Transverse colon (tissue), 4 donors: ENCODE measurements at regions of chrX and their contacts with region 1.

Region 1: DNA sequence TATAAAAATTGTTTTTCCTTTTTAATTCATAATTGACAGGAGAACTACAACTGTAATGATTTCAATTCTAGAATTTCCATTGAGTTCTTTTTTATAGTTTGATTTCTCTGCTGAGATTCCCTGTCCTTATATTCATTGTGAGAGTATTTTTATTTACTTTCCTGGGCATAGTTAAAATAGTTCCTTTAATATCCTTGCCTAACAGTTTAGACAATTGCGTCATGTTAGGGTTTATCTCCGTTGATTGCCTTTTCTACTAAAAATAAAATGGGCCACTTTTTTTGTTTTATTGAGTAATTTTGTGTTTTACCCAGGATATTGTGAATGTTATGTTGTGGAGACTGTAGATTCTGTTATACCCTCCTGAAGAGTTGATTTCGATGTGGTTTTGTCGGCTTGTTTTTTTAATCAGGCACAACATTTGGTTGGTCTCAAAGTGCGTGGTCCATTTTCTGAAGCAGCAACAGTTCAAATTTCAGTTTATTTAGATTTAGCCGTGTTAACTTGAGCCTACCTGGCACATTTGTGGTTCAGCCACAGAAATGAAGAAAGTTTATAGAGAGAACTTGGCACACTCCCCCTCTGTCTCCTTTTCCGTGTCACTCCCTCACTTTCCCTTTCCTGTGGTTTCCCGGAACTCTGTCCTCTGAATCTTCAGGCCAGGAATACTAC is 16.0 kb upstream of the PRRG1 start:
- DNase-seq: no peak
- H3K4me3 ChIP-seq: no peak overlapping the region
- H3K27ac ChIP-seq: no peak overlapping the region
- H3K4me1 ChIP-seq: no peaks in the 10 kb centered on the region
- H3K27me3 ChIP-seq: no peaks in the 10 kb centered on the region
- CTCF ChIP-seq: no peak
- EP300 ChIP-seq: no peak
- POLR2A ChIP-seq: no peak

Region 2: DNA sequence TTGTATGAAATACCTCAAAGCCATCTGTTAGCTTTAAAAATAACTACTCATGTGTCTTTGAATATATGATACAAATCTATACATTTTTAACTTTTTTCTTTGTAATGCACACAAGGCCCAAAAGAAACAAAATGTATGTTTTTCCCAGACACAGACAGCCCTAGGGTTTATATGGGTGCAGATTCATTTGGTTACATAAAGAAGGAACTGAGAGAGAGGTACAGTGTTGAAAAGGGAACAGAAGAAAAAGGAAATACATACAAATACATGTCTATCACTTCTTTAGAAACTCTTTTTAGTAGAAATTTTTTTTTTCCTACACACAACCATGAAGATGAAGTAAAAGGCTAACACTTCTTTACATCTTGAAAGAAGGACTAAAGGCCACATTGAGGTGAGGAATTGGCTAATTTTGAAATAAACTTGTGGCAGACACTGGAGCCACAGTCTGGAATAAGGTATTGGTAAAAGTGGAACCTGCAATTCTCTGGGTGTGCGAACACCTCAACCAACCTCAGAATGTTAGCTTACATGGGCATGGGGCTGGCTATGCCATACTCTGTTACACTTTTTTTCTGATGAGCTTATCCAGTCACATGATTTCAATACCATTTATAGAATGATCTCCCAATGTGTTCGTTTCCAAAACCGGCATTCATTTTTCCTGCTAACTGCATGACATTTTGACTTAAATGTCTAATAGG is 257.1 kb before region 1 on chrX:
- in situ Hi-C with region 1: no loop called
- intact Hi-C with region 1: no loop called
- DNase-seq: no peak
- H3K4me3 ChIP-seq: no peak overlapping the region
- H3K27ac ChIP-seq: no peak overlapping the region
- H3K4me1 ChIP-seq: no peaks in the 10 kb centered on the region
- H3K27me3 ChIP-seq: no peaks in the 10 kb centered on the region
- CTCF ChIP-seq: no peak
- EP300 ChIP-seq: no peak
- POLR2A ChIP-seq: no peak

Region 3: DNA sequence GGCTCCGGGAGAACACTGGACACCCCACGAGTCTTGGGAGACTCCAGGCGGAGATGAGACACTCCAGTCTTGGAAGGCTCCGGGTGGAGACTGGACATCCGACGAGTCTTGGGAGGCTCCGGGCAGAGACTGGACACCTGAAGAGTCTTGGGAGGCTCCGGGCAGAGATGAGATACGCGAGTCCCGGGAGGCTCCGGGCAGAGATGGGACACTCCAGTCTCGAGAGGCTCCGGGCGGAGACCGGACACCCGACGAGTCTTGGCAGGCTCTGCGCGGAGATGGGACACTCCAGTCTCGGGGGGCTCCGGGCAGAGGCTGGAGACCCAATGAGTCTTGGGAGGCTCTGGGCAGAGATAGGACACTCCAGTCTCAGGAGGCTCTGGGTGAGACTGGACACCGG is 210.2 kb after region 1 on chrX:
- in situ Hi-C with region 1: no loop called
- intact Hi-C with region 1: loop called (anchors 5 kb)
- DNase-seq: no peak
- H3K4me3 ChIP-seq: no peak overlapping the region
- H3K27ac ChIP-seq: no peak overlapping the region
- H3K4me1 ChIP-seq: no peaks in the 10 kb centered on the region
- H3K27me3 ChIP-seq: no peaks in the 10 kb centered on the region
- CTCF ChIP-seq: no peak
- EP300 ChIP-seq: no peak
- POLR2A ChIP-seq: no peak